ENCODE measurements at regions of chr4 and their contacts with region 1.

Region 1: GRCh38 chr4:13548984-13549546 is 4.8 kb upstream of the NKX3-2 start:
- DNase-seq: peak; percentile 94

Region 2: GRCh38 chr4:12852338-12853307 is 696.4 kb before region 1 on chr4:
- intact Hi-C with region 1: loop called (anchors 10 kb)
- DNase-seq: no peak